Activated CD8-positive, alpha-beta T cell treated with anti-CD3 and anti-CD28 coated beads, Interleukin-2, amount 10 ng/mL, durations not matched to agents 7 days and 5 days (primary cell): ENCODE measurements at regions of chr10 and their contacts with region 1.

Region 1: GRCh38 chr10:30687698-30688219 is 58.2 kb upstream of the LYZL2 start:
- DNase-seq: peak; percentile 84
- ATAC-seq: peak; percentile 86
- H3K4me3 Mint-ChIP-seq: no peak overlapping the region
- H3K27ac Mint-ChIP-seq: no peak overlapping the region
- H3K4me1 Mint-ChIP-seq: peaks cover 29% of the 10 kb centered on the region
- H3K27me3 Mint-ChIP-seq: peaks cover 16% of the 10 kb centered on the region

Region 2: GRCh38 chr10:30542001-30542894 is 145.5 kb before region 1 on chr10:
- CTCF ChIA-PET with region 1: no interaction called
- POLR2A ChIA-PET with region 1: no interaction called
- DNase-seq: no peak
- ATAC-seq: no peak
- H3K4me3 Mint-ChIP-seq: no peak overlapping the region
- H3K27ac Mint-ChIP-seq: no peak overlapping the region
- H3K4me1 Mint-ChIP-seq: peaks cover 14% of the 10 kb centered on the region
- H3K27me3 Mint-ChIP-seq: peaks cover 2% of the 10 kb centered on the region

Region 3: DNA sequence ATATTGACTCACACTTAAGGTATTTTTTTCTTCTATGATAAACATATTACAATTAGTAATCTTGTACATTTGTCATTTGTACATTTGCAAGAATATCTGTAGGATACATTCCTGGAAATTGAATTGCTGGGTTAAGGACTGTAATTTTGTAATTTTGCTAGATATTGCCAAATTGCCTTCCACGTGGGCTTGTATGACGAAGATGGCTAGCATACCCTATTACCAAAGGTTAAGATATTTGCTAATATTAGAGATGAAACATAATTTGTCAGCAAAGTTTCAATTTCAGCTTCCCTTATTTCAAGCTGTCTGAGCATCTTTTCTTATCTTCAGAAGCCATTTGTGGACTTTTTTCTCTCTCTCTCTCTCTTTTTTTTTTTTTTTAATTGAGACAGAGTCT is 57.2 kb before region 1 on chr10:
- CTCF ChIA-PET with region 1: no interaction called
- POLR2A ChIA-PET with region 1: no interaction called
- DNase-seq: no peak
- ATAC-seq: no peak
- H3K4me3 Mint-ChIP-seq: no peak overlapping the region
- H3K27ac Mint-ChIP-seq: no peak overlapping the region
- H3K4me1 Mint-ChIP-seq: no peaks in the 10 kb centered on the region
- H3K27me3 Mint-ChIP-seq: peaks cover 25% of the 10 kb centered on the region

Region 4: GRCh38 chr10:30671026-30671616 is 16.6 kb before region 1 on chr10:
- CTCF ChIA-PET with region 1: interaction called, 65 read pairs
- POLR2A ChIA-PET with region 1: no interaction called
- DNase-seq: peak; percentile 53
- ATAC-seq: peak; percentile 80
- H3K4me3 Mint-ChIP-seq: peak overlapping the region; percentile 44
- H3K27ac Mint-ChIP-seq: no peak overlapping the region
- H3K4me1 Mint-ChIP-seq: peaks cover 5% of the 10 kb centered on the region
- H3K27me3 Mint-ChIP-seq: peaks cover 12% of the 10 kb centered on the region

Region 5: GRCh38 chr10:30709229-30709628 is 21.5 kb after region 1 on chr10:
- CTCF ChIA-PET with region 1: interaction called, 97 read pairs
- POLR2A ChIA-PET with region 1: no interaction called
- DNase-seq: no peak
- ATAC-seq: no peak
- H3K4me3 Mint-ChIP-seq: no peak overlapping the region
- H3K27ac Mint-ChIP-seq: no peak overlapping the region
- H3K4me1 Mint-ChIP-seq: peaks cover 25% of the 10 kb centered on the region
- H3K27me3 Mint-ChIP-seq: peaks cover 4% of the 10 kb centered on the region

Region 6: GRCh38 chr10:30736685-30737232 is 49.0 kb after region 1 on chr10:
- CTCF ChIA-PET with region 1: interaction called, 16 read pairs
- POLR2A ChIA-PET with region 1: no interaction called
- DNase-seq: peak; percentile 64
- ATAC-seq: peak; percentile 87
- H3K4me3 Mint-ChIP-seq: no peak overlapping the region
- H3K27ac Mint-ChIP-seq: peak overlapping the region; percentile 17
- H3K4me1 Mint-ChIP-seq: peaks cover 25% of the 10 kb centered on the region
- H3K27me3 Mint-ChIP-seq: no peaks in the 10 kb centered on the region